AG04449 (cell line): ENCODE measurements at regions of chr14 and their contacts with region 1.

Region 1: DNA sequence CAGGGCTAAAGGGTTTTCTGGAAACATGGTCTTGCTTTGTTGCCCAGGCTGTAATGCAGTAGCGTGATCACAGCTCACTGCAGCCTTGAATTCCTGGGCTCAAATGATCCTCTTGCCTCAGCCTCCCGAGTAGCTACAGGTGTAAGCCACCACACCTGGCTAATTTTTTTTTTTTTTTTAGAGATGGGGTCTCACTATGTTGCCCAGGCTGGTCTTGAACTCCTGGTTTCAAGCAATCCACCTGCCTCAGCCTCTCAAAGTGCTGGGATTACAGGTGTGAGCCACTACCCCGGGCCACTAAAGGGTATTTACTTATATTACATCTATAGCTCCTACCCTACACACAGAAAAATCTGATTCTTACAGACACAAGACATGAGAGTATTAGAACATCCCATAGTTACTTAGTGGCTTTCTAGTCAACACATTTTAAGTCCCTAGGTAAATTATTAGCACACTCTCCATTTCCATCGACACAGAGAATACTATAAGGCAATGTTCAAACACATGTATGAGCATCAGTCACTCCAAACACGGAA is 6.2 kb upstream of the DCAF11 start:
- DNase-seq: no peak
- H3K4me3 ChIP-seq: no peak overlapping the region
- CTCF ChIP-seq: no peak

Region 2: DNA sequence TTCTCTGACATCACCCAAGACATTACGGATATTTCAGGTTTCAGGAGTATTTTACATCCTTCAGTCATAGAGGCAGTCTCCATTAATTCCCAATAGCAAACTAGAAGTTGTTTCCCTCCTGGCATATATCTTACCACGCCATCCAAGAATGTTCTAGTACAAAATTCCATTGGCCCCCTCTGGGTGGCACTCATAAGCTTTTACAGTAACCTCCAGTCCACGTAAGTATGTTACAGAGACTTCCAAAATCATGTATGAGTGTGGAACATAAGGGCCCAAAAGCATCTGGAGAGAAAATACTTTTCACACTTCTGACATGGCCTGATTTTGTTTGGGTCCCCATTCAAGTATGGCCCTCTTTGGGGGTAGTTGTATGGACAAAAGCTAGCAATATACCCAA is 212.9 kb before region 1 on chr14:
- CTCF ChIA-PET with region 1: no interaction called
- POLR2A ChIA-PET with region 1: no interaction called
- DNase-seq: no peak
- H3K4me3 ChIP-seq: no peak overlapping the region
- CTCF ChIP-seq: no peak

Region 3: GRCh38 chr14:24013654-24014514 is 94.5 kb before region 1 on chr14:
- CTCF ChIA-PET with region 1: interaction called, 11 read pairs
- POLR2A ChIA-PET with region 1: no interaction called
- DNase-seq: no peak
- H3K4me3 ChIP-seq: no peak overlapping the region
- CTCF ChIP-seq: peak; percentile 75

Region 4: DNA sequence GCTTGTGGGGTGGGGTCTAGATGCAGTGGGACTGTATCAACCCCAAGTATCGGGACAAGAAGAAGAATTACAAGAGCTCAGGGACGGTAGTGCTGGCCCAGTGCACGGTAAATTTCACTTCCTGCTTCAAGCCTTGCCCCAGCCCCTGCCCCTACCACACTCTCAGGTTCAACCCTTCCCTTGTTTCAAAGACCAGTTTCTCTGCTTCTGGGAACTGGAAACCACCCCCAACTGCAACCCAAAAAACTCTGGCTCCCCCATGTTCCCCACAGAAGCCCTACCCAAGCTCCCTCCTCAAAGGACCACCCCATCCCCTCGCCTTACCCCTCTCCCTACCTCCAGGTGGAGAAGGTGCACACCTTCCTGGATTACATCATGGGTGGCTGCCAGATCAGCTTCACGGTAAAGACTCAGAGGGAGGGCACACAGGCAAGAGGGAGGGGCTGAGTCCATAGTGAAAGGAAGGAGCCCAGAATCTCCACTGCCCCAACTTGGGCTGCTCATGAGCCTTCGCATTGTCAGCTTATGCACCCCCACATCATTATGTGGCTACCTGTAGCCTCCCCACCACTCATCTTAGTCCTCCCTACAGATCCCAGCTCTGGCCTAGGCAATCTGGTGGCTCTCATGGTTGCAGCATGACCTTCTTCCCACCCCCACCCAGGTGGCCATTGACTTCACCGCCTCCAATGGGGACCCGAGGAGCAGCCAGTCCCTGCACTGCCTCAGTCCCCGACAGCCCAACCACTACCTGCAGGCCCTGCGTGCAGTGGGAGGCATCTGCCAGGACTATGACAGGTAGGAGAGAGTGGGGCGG is 32.7 kb before region 1 on chr14:
- CTCF ChIA-PET with region 1: interaction called, 23 read pairs
- POLR2A ChIA-PET with region 1: no interaction called
- DNase-seq: no peak
- H3K4me3 ChIP-seq: no peak overlapping the region
- CTCF ChIP-seq: no peak

Region 5: DNA sequence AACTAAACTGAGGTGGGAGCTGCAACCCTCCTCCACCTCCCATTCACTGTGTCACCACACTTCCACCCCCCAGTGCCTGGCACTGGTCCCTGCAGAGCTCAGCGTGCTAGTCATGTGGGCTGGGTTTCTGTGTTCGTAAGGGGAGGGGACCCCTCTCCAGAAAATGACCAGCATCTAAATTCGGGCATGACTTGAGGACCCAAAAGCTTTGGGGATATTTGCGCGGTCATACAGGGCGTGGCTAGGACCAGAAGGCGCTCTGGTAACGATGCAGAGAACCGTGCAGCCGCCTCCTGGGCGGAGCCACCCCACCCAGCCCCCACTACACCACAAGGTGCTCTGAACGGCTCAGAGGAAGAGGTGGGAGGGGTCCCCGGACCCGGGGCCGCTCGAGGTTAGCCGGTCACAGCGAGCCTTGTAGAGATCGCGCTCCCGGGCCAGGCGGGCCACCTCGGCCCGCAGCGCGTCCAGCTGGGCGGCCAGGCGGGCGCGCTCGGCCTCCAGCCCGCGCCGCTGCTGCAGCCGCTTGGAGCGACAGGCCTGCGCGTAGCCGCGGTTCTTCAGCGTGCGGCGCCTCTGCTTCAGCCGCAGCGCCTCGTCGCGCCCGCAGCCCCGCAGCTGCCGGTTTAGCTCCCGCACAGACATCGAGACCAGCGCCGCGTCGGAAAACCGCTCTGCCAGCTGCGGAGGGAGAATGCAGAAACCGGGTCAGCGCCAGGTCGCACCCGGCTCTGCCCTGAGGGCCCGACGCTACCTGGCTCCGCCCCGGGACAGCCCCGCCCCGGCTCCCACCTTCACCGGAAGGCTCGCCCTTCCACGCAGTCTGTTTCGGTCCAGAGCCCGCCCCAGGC is 27.3 kb before region 1 on chr14:
- CTCF ChIA-PET with region 1: interaction called, 23 read pairs
- POLR2A ChIA-PET with region 1: no interaction called
- DNase-seq: no peak
- H3K4me3 ChIP-seq: peak overlapping the region; percentile 55
- CTCF ChIP-seq: no peak

Region 6: DNA sequence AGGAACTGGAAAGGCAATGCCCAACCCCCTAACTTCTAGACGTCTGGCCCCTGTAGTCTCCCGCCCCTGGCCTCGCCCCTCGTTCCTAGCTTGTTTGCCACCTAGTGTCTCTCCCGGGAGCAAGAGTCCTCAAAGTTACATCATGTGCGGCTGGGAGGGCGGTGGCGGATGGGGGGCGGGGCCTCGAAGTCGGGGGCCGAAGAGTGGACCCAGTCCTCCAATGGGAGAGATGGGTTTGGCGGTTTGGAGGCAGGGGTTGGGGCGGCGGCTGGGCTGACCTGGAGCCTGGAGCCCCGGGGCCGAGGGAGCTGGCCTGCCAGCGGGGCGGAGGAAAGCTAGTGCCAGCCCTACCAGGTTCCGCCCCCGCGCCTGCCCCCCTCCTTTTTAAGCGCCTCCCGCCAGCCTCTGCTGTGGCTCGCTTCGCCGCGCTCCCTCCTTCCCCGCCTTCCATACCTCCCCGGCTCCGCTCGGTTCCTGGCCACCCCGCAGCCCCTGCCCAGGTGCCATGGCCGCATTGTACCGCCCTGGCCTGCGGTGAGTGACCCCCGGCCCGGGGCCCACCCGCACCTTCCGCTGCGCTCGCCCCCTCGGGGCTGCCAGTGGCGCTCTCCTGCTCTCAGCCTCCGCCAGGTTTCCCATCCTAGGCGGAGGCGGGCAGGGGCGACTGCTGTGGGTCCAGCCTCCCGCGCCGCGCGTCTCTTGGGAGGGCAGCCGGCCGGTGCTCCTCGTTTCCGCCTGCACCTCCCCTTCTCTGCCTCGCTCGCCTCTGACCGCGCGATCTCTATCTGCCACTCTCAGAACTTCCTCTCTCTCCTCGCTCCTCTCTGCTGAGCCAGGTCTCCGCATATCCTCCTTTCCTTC is 14.3 kb before region 1 on chr14 and contains the start of gene PCK2:
- CTCF ChIA-PET with region 1: interaction called, 164 read pairs
- POLR2A ChIA-PET with region 1: interaction called, 44 read pairs
- DNase-seq: peak; percentile 63
- H3K4me3 ChIP-seq: peak within 1 kb of the TSS; percentile 87
- CTCF ChIP-seq: peak; percentile 9

Region 7: GRCh38 chr14:24135834-24136542 is 27.6 kb after region 1 on chr14 and contains the start of gene PSME1:
- CTCF ChIA-PET with region 1: interaction called, 15 read pairs
- POLR2A ChIA-PET with region 1: interaction called, 3 read pairs
- DNase-seq: no peak
- H3K4me3 ChIP-seq: peak within 1 kb of the TSS; percentile 73
- CTCF ChIP-seq: no peak

Region 8: GRCh38 chr14:24146978-24147760 is 38.8 kb after region 1 on chr14 and contains the start of gene RNF31:
- CTCF ChIA-PET with region 1: interaction called, 22 read pairs
- POLR2A ChIA-PET with region 1: interaction called, 14 read pairs
- DNase-seq: peak; percentile 88
- H3K4me3 ChIP-seq: peak within 1 kb of the TSS; percentile 92
- CTCF ChIP-seq: no peak